Activated CD8-positive, alpha-beta T cell treated with anti-CD3 and anti-CD28 coated beads, Interleukin-2, amount 10 ng/mL, durations not matched to agents 7 days and 5 days (primary cell): ENCODE measurements at regions of chr1 and their contacts with region 1.

Region 1: DNA sequence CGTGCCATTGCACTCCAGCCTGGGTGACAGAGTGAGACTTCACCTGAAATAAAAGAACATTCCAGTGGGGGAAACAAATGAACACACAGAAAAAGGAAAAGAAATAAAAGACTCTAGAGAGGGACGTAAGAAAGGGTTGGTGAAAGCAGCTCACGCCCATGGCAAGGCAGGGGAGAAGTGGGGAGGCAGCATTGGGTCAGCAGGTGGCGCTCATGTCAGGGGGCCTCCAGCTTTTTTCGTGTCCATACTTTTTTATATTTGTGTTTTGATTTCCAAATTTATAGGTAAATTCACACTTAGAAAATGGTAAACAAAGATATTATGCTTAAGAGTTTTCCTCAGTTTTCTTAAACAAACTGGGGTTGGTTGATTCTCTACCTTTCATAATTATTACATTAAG is 45.5 kb downstream of the VPS13D start:
- DNase-seq: peak; percentile 58
- ATAC-seq: no peak
- H3K4me3 Mint-ChIP-seq: no peak overlapping the region
- H3K27ac Mint-ChIP-seq: no peak overlapping the region
- H3K4me1 Mint-ChIP-seq: no peaks in the 10 kb centered on the region
- H3K27me3 Mint-ChIP-seq: no peaks in the 10 kb centered on the region

Region 2: DNA sequence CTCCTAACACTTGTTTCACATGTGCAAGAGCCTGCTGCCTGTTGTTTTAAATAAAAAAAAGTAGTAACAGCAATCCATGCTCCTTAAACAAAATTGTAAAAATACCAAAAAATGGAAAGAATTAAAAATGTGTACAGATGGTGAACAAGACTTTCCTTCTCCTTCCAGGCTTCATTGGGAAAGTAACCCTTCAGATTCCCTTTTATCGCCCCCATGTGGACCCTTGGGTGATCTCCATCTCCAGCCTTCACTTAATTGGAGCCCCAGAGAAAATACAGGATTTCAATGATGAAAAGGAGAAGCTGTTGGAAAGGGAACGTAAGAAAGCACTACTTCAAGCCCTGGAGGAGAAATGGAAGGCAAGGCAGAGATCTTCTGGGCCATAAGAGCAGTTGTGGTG is 31.3 kb before region 1 on chr1:
- CTCF ChIA-PET with region 1: interaction called, 10 read pairs
- POLR2A ChIA-PET with region 1: no interaction called
- DNase-seq: peak; percentile 27
- ATAC-seq: no peak
- H3K4me3 Mint-ChIP-seq: no peak overlapping the region
- H3K27ac Mint-ChIP-seq: no peak overlapping the region
- H3K4me1 Mint-ChIP-seq: no peaks in the 10 kb centered on the region
- H3K27me3 Mint-ChIP-seq: no peaks in the 10 kb centered on the region

Region 3: GRCh38 chr1:12255918-12256317 is 19.5 kb before region 1 on chr1:
- CTCF ChIA-PET with region 1: interaction called, 12 read pairs
- POLR2A ChIA-PET with region 1: no interaction called
- DNase-seq: no peak
- ATAC-seq: no peak
- H3K4me3 Mint-ChIP-seq: no peak overlapping the region
- H3K27ac Mint-ChIP-seq: no peak overlapping the region
- H3K4me1 Mint-ChIP-seq: no peaks in the 10 kb centered on the region
- H3K27me3 Mint-ChIP-seq: no peaks in the 10 kb centered on the region

Region 4: DNA sequence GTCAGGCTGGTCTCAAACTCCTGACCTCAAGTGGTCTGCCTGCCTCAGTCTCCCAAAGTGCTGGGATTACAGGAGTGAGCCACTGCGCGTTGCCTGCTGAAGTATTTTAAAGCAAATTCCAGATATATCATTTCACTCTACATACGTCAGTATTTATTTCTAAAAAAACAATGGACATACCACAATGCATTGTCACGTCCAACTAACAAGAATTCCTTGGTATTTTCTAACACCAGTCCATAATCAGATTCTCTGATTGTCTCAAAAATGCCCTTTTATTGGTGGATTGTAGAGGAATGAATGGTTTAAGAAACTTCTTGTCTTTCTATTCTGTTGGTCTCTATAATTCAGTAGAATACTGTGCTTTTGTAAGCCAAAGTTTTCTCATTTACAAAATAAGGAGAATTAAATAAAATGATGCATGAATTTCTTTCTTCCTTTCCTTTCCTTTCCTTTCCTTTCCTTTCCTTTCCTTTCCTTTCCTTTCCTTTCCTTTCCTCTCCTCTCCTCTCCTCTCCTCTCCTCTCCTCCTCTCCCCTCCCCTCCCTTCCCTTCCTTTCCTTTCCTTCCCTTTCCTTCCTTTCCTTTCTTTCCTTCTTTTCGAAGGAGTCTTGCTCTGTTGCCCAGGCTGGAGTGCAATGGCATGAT is 10.3 kb after region 1 on chr1:
- CTCF ChIA-PET with region 1: interaction called, 11 read pairs
- POLR2A ChIA-PET with region 1: no interaction called
- DNase-seq: no peak
- ATAC-seq: no peak
- H3K4me3 Mint-ChIP-seq: no peak overlapping the region
- H3K27ac Mint-ChIP-seq: no peak overlapping the region
- H3K4me1 Mint-ChIP-seq: peaks cover 10% of the 10 kb centered on the region
- H3K27me3 Mint-ChIP-seq: no peaks in the 10 kb centered on the region

Region 5: GRCh38 chr1:12296623-12297022 is 21.3 kb after region 1 on chr1:
- CTCF ChIA-PET with region 1: interaction called, 11 read pairs
- POLR2A ChIA-PET with region 1: interaction called, 3 read pairs
- DNase-seq: no peak
- ATAC-seq: peak; percentile 61
- H3K4me3 Mint-ChIP-seq: peak overlapping the region; percentile 24
- H3K27ac Mint-ChIP-seq: peak overlapping the region; percentile 65
- H3K4me1 Mint-ChIP-seq: peaks cover 25% of the 10 kb centered on the region
- H3K27me3 Mint-ChIP-seq: no peaks in the 10 kb centered on the region

Region 6: DNA sequence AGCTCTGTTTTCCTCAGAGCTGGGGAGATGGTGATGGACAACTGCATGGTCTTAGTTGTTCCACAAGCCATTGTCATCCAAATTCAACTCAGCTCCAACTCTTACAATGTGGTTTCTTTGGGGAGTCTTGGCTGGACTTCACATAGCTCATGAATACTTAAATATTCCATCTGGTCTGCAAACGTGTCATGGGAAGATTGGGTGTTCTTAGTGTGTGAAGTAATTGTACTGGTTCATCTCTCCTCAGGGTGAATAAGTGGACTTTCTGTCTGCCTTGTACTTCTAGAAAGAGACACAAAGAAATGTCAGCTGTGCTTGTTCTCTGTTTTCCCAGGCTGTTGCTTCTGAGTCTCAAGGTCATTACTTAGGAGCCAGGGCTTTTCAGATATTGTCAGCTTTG is 61.0 kb after region 1 on chr1:
- CTCF ChIA-PET with region 1: no interaction called
- POLR2A ChIA-PET with region 1: no interaction called
- DNase-seq: no peak
- ATAC-seq: no peak
- H3K4me3 Mint-ChIP-seq: no peak overlapping the region
- H3K27ac Mint-ChIP-seq: no peak overlapping the region
- H3K4me1 Mint-ChIP-seq: peaks cover 13% of the 10 kb centered on the region
- H3K27me3 Mint-ChIP-seq: no peaks in the 10 kb centered on the region